ENCODE measurements at regions of chr16 and their contacts with region 1.

Region 1: DNA sequence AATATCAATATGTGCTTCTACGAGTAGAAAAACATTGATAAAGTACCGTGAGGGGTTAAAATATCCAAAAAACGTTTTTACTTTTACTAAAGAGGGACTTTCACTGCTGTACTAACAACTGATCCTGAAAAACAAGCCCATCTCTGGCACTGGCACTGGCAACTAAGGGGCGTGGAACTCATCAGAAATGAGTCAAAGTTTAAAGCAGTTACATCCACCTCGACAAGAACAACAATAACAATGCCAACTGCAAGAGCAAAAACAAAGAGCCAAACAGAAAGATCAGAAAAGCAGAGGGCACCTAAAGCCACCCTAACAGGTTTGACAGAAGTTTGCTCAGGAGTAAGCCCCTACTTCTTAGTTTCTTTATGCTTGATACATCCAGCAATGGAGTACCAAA is 13.1 kb downstream of the MBTPS1 start:
- DNase-seq: no peak
- ATAC-seq: no peak
- H3K4me3 ChIP-seq: no peak overlapping the region
- H3K4me3 Mint-ChIP-seq: no peak overlapping the region
- H3K27ac ChIP-seq: no peak overlapping the region
- H3K27ac Mint-ChIP-seq: no peak overlapping the region
- H3K4me1 ChIP-seq: peaks cover 0 to 20% of the 10 kb centered on the region in 2 experiments
- H3K4me1 Mint-ChIP-seq: peaks cover 50 to 65% (median 65%) of the 10 kb centered on the region in 3 donors
- H3K27me3 ChIP-seq: no peaks in the 10 kb centered on the region
- H3K27me3 Mint-ChIP-seq: no peaks in the 10 kb centered on the region

Region 2: GRCh38 chr16:84144209-84144858 is 40.7 kb after region 1 on chr16:
- CTCF ChIA-PET with region 1: interaction called in 1 of 2 experiments, 11 read pairs
- POLR2A ChIA-PET with region 1: interaction called in 1 of 2 experiments, 4 read pairs
- DNase-seq: peak in 33 of 35 experiments; percentile 3 to 54 (median 29)
- ATAC-seq: peak; percentile 48 to 54 (median 52)
- H3K4me3 ChIP-seq: peak overlapping the region; percentile 65 to 71
- H3K4me3 Mint-ChIP-seq: peak overlapping the region; percentile 86 to 99 (median 95)
- H3K27ac ChIP-seq: no peak overlapping the region
- H3K27ac Mint-ChIP-seq: peak overlapping the region; percentile 76 to 83
- H3K4me1 ChIP-seq: peaks cover 3 to 18% of the 10 kb centered on the region in 2 experiments
- H3K4me1 Mint-ChIP-seq: peaks cover 23 to 30% (median 29%) of the 10 kb centered on the region in 3 donors
- H3K27me3 ChIP-seq: peaks cover 4 to 19% of the 10 kb centered on the region in 2 experiments
- H3K27me3 Mint-ChIP-seq: no peaks in the 10 kb centered on the region

Region 3: DNA sequence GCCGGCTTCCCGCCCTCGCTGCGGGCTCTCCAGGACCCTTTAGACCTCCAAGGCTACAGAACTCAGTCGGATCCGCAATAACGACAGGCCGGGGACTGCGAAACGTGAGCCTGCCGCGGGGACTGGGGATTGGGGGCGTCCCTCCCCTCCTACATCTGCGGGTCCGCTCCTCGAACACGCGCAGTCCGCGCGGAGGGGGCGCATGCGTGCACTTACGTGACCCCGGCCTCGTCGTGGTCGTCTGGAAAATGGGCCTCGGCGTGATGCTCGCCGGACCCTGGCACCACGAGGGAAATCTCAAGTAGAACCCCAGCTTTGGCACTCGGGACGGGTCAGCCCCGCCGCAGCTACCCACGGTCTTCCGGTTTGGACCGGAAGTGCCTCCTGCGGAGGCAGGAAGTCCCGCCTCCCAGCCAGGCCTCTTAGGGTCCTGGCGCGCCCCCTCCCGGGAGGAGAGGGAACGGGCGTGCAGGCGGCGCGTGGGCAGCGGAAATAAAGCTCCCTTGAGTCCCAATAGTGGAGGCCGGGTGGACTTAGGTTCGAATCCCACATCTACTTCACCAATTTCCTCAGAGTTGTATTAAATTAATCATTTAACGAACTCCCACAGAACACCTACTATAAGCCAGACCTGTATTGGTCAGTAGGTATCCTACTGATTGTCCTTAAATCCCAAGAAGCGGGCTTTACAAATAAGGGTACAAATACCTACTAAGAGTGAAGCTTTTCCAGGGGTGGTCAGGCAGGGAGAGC is 83.2 kb after region 1 on chr16 and contains the start of gene TAF1C:
- CTCF ChIA-PET with region 1: no interaction called
- POLR2A ChIA-PET with region 1: no interaction called
- DNase-seq: peak; percentile 74 to 96 (median 85)
- ATAC-seq: peak; percentile 95 to 98 (median 96)
- H3K4me3 ChIP-seq: peak within 1 kb of the TSS; percentile 88 to 97
- H3K4me3 Mint-ChIP-seq: peak within 1 kb of the TSS; percentile 92 to 96 (median 93)
- H3K27ac ChIP-seq: peak within 1 kb of the TSS; percentile 52
- H3K27ac Mint-ChIP-seq: peak within 1 kb of the TSS; percentile 89 to 93
- H3K4me1 ChIP-seq: peaks cover 3 to 27% of the 10 kb centered on the region in 2 experiments
- H3K4me1 Mint-ChIP-seq: peaks cover 25 to 30% (median 28%) of the 10 kb centered on the region in 3 donors
- H3K27me3 ChIP-seq: no peaks in the 10 kb centered on the region
- H3K27me3 Mint-ChIP-seq: no peaks in the 10 kb centered on the region
- total RNA-seq, gene TAF1C: 81.9 to 97.6 (median 92.8) TPM

Region 4: DNA sequence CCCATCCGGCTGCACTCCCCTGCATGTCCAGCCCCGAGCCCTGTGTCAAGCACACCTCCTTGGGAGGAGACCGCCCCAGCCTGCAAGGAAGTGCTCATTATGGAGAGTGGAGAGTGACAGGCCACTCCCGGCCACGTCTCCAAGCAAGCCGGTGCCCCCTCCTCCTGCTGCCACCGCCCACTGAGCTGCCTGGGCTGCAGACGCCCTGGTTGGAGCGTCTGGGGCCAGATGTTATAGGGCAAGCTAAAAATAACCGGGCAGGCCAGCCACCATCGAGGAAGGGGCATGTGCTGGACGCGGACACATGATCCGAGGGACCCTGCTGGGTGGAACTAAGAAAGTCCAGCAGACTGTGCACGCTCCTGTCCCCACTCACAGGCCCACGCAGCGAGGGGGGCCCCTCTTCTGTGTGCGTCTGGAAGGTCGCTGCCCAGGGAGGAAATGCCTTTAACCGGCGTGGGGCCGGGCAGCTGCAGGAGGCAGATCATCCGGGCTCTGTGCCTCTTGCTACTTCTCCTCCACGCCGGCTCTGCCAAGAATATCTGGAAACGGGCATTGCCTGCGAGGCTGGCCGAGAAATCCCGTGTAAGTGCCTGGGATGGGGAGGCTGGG is 191.0 kb after region 1 on chr16 and contains the start of gene WFDC1:
- CTCF ChIA-PET with region 1: no interaction called
- POLR2A ChIA-PET with region 1: no interaction called
- DNase-seq: no peak
- ATAC-seq: peak in 3 of 4 experiments; percentile 27 to 40 (median 37)
- H3K4me3 ChIP-seq: no peak within 1 kb of the TSS
- H3K4me3 Mint-ChIP-seq: peak within 1 kb of the TSS in 2 of 3 donors; percentile 13 to 53
- H3K27ac ChIP-seq: no peak within 1 kb of the TSS
- H3K27ac Mint-ChIP-seq: no peak within 1 kb of the TSS
- H3K4me1 ChIP-seq: peaks cover 0 to 10% of the 10 kb centered on the region in 2 experiments
- H3K4me1 Mint-ChIP-seq: peaks cover 13 to 14% (median 13%) of the 10 kb centered on the region in 3 donors
- H3K27me3 ChIP-seq: peaks cover 0 to 59% of the 10 kb centered on the region in 2 experiments
- H3K27me3 Mint-ChIP-seq: peaks cover 51 to 64% of the 10 kb centered on the region in 2 donors
- total RNA-seq, gene WFDC1: not detected

Region 5: GRCh38 chr16:84369720-84370565 is 266.3 kb after region 1 on chr16:
- CTCF ChIA-PET with region 1: no interaction called
- POLR2A ChIA-PET with region 1: no interaction called
- DNase-seq: no peak
- ATAC-seq: no peak
- H3K4me3 ChIP-seq: no peak overlapping the region
- H3K4me3 Mint-ChIP-seq: peak overlapping the region in 1 of 3 donors; percentile 13
- H3K27ac ChIP-seq: no peak overlapping the region
- H3K27ac Mint-ChIP-seq: no peak overlapping the region
- H3K4me1 ChIP-seq: peaks cover 3 to 8% of the 10 kb centered on the region in 2 experiments
- H3K4me1 Mint-ChIP-seq: peaks cover 10 to 18% (median 17%) of the 10 kb centered on the region in 3 donors
- H3K27me3 ChIP-seq: peaks cover 3 to 57% of the 10 kb centered on the region in 2 experiments
- H3K27me3 Mint-ChIP-seq: peaks cover 43 to 56% of the 10 kb centered on the region in 2 donors